Mammary epithelial cell (primary cell): ENCODE measurements at regions of chr9 and their contacts with region 1.

Region 1: DNA sequence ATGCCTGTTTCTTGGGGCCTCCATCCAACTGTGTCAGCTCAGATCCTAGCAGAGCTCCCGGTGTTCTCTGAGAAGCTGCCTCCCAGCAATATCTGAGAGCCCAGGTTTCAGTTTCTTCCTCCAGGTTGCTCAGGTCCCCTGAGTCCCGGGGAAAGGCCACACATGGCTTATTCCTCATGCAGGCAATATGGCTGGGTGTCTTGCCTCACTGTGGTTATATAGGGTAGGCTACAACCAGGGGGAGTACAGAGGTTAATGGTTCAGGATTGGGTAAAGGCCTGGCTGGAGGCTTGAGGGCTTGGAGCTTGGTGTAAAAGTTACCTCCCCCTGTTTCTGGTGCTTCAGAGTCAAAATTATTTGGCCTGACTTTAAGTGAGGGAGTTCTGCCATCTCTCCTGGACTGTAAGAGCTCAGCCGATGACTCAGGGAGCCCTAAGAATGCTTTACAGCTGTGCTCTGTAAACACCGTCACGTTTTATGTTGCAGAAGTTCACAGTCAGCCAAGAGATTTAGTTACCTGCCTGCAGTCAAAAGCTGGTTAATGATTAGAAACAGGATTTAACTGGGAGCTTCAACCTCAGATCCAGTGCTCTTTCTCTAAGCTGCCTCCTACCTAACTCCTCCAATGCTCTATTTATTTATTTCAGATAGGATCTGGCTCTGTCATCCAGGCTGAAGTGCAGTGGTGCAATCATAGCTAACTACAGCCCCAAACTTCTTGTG is 24.3 kb upstream of the UBAP2 start:
- DNase-seq: peak; percentile 79
- H3K4me3 ChIP-seq: no peak overlapping the region
- H3K27ac ChIP-seq: no peak overlapping the region
- H3K4me1 ChIP-seq: peaks cover 18% of the 10 kb centered on the region
- H3K27me3 ChIP-seq: no peaks in the 10 kb centered on the region
- CTCF ChIP-seq: no peak

Region 2: DNA sequence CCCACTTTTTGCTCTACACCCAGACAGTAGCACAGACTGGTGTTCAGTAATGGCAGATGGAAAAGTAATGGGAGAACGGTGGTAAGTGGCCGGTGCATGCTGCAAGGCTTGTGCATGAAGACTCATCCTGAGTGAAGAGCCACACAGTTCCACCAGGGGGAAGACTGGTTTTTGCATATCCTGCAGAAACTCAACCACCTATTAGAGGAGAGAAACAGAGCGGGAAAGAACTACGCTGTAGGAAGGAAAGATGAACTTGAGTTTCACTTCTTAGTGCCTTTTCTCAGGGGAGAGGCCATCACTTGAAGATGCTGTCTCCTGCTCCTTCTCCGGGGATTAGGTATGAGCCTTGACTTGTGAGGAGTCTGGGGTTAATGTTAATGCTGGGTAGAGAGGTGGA is 287.1 kb before region 1 on chr9:
- CTCF ChIA-PET with region 1: interaction called, 10 read pairs
- dilution Hi-C with region 1: no loop called
- in situ Hi-C with region 1: no loop called
- intact Hi-C with region 1: no loop called
- DNase-seq: no peak
- H3K4me3 ChIP-seq: no peak overlapping the region
- H3K27ac ChIP-seq: no peak overlapping the region
- H3K4me1 ChIP-seq: peaks cover 14% of the 10 kb centered on the region
- H3K27me3 ChIP-seq: no peaks in the 10 kb centered on the region
- CTCF ChIP-seq: no peak

Region 3: GRCh38 chr9:34010979-34011378 is 62.0 kb before region 1 on chr9:
- CTCF ChIA-PET with region 1: no interaction called
- dilution Hi-C with region 1: no loop called
- in situ Hi-C with region 1: no loop called
- intact Hi-C with region 1: loop called (anchors 1 kb)
- DNase-seq: peak; percentile 2
- H3K4me3 ChIP-seq: no peak overlapping the region
- H3K27ac ChIP-seq: no peak overlapping the region
- H3K4me1 ChIP-seq: no peaks in the 10 kb centered on the region
- H3K27me3 ChIP-seq: no peaks in the 10 kb centered on the region
- CTCF ChIP-seq: peak; percentile 27 to 36

Region 4: DNA sequence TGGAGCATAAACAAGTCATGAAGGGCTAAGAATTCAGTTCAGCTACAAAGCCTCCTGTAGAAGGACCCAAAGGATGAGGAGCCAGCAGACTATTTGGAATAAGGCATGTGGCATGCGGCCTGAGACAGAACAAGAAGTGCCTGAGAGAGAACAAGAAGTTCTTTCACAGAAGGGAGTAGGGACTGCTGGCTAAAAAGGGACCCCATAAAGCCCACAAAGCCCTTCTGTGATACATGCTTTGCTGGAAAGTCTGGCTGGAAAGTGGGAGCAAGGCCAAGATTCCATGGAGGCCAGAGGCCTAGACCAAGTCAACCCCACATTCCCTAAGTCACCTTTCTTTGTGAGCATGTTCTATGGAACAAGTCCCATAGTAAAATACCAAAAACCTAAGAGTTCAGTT is 11.5 kb after region 1 on chr9:
- CTCF ChIA-PET with region 1: interaction called, 10 read pairs
- dilution Hi-C with region 1: no loop called
- in situ Hi-C with region 1: no loop called
- intact Hi-C with region 1: no loop called
- DNase-seq: no peak
- H3K4me3 ChIP-seq: no peak overlapping the region
- H3K27ac ChIP-seq: no peak overlapping the region
- H3K4me1 ChIP-seq: no peaks in the 10 kb centered on the region
- H3K27me3 ChIP-seq: no peaks in the 10 kb centered on the region
- CTCF ChIP-seq: no peak

Region 5: GRCh38 chr9:34328987-34329832 is 256.2 kb after region 1 on chr9 and contains the starts of genes KIF24 and NUDT2:
- CTCF ChIA-PET with region 1: no interaction called
- dilution Hi-C with region 1: no loop called
- in situ Hi-C with region 1: no loop called
- intact Hi-C with region 1: loop called (anchors 2 kb)
- DNase-seq: peak; percentile 100
- H3K4me3 ChIP-seq: peak within 1 kb of the TSS; percentile 85 to 89 (median 86)
- H3K27ac ChIP-seq: peak within 1 kb of the TSS; percentile 96
- H3K4me1 ChIP-seq: peaks cover 45% of the 10 kb centered on the region
- H3K27me3 ChIP-seq: no peaks in the 10 kb centered on the region
- CTCF ChIP-seq: no peak
- total RNA-seq, gene KIF24: 1.3 to 3.9 TPM
- total RNA-seq, gene NUDT2: 17.8 to 22.9 TPM